MCF 10A (cell line): ENCODE measurements at regions of chr4 and their contacts with region 1.

Region 1: DNA sequence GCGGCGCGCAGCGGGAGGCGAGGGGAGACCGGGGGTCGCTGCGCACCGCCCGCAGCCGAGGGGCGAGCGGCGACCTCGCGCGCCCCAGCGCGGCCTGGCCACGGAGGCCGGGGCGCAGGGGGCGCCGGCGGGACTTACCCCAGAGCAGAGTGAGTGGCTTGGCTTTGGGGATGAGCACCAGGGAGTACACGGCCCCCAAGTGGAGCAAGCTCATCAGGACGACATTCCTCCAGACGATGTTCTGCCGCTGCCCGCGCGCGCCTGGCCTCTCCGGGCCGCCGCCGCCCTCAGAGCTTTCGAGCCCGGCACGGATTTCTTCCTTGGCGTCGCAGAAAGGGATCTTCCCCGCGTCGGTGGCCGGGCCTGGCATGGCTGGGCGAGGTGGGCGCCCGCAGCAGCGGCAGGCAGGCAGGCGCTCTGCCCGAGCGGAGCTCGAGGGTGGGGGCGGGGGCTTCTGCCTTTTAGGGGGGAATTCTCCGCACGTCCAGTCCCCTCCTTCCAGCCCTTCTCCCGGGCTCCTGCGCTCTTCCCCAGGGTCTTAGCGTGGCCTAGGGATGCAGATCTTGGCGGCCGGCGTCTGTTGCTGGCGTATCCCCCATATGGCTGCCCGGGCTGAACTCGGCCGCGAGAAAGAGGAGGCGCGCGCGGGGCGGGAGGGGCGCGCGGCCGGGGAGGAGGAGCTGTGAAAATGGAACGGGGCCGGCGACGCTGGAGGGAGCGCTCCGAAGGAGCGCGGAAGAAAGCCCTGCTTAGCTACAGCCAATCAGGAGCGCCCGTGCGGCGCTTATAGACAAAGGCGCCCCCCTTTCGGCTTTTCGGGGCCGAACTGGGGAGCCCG is at the start of gene SCD5:
- DNase-seq: peak; percentile 77
- H3K4me3 Mint-ChIP-seq: peak within 1 kb of the TSS; percentile 84
- H3K27ac Mint-ChIP-seq: no peak within 1 kb of the TSS
- H3K4me1 Mint-ChIP-seq: peaks cover 11% of the 10 kb centered on the region
- H3K27me3 Mint-ChIP-seq: no peaks in the 10 kb centered on the region
- CTCF ChIP-seq: no peak
- total RNA-seq, gene SCD5: 3.5 and 3.6 TPM in 2 replicates

Region 2: GRCh38 chr4:82352913-82353366 is 445.4 kb before region 1 on chr4:
- CTCF ChIA-PET with region 1: no interaction called
- POLR2A ChIA-PET with region 1: no interaction called
- intact Hi-C with region 1: no loop called
- DNase-seq: no peak
- H3K4me3 Mint-ChIP-seq: no peak overlapping the region
- H3K27ac Mint-ChIP-seq: no peak overlapping the region
- H3K4me1 Mint-ChIP-seq: peaks cover 5% of the 10 kb centered on the region
- H3K27me3 Mint-ChIP-seq: no peaks in the 10 kb centered on the region
- CTCF ChIP-seq: no peak

Region 3: DNA sequence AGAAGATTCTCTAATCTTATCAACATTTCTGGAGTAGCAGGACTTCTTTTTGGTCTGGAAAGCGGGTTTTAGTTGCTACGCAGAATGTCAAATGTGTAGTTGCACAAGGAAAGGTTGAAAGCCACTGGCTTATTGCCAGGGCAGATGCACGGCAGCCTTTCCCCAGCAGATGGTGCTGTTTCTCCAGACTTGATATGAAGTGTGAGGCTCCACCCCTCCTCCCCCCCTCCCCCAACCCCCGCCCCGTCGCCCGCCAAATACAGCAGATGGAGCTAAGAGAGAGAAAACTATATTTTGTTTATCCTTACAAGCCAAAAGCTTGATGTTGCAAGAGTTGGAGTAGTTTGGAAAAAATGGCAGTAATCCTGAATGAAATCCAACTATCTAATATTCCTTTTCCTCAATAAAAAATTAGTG is 336.0 kb before region 1 on chr4:
- CTCF ChIA-PET with region 1: interaction called, 9 read pairs
- POLR2A ChIA-PET with region 1: no interaction called
- intact Hi-C with region 1: loop called (anchors 1 kb)
- DNase-seq: peak; percentile 90
- H3K4me3 Mint-ChIP-seq: no peak overlapping the region
- H3K27ac Mint-ChIP-seq: no peak overlapping the region
- H3K4me1 Mint-ChIP-seq: peaks cover 6% of the 10 kb centered on the region
- H3K27me3 Mint-ChIP-seq: no peaks in the 10 kb centered on the region
- CTCF ChIP-seq: peak; percentile 86

Region 4: GRCh38 chr4:82525395-82525831 is 273.0 kb before region 1 on chr4:
- CTCF ChIA-PET with region 1: no interaction called
- POLR2A ChIA-PET with region 1: no interaction called
- intact Hi-C with region 1: no loop called
- DNase-seq: no peak
- H3K4me3 Mint-ChIP-seq: no peak overlapping the region
- H3K27ac Mint-ChIP-seq: no peak overlapping the region
- H3K4me1 Mint-ChIP-seq: peaks cover 10% of the 10 kb centered on the region
- H3K27me3 Mint-ChIP-seq: peaks cover 14% of the 10 kb centered on the region
- CTCF ChIP-seq: no peak

Region 5: DNA sequence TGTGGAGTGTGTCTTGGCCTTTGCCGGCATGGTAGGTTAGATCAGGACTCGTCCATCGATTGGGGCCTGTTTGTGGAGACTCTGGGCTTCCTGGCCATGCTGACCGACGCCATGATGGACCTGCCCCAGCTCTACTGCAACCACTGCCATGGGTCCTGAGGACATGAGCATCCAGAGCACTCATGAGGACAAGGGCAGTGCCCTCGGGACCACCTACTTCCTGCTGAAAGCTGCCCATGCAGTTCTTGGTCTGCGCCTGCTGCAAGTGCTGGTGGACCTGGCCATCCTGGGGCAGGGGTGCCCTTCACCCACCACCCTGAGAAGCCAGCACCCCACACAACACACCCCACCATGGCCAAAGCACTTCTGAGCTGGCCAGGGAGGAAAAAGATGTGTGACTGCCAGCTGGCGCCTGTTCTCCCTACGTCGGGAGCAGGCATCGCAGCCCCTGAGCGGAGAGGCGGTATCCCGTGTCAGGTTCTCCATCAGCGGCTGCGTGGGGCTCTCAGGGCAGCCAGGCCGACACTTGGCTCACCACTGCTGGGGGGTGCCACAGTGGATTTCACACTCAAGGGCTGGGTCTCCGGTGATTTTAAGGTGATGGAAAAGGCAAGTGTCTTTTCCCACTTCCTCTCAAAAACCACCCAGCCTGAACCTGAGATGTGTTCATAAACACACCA is 106.1 kb before region 1 on chr4:
- CTCF ChIA-PET with region 1: interaction called, 10 read pairs
- POLR2A ChIA-PET with region 1: no interaction called
- intact Hi-C with region 1: no loop called
- DNase-seq: no peak
- H3K4me3 Mint-ChIP-seq: no peak overlapping the region
- H3K27ac Mint-ChIP-seq: no peak overlapping the region
- H3K4me1 Mint-ChIP-seq: peaks cover 5% of the 10 kb centered on the region
- H3K27me3 Mint-ChIP-seq: no peaks in the 10 kb centered on the region
- CTCF ChIP-seq: no peak

Region 6: DNA sequence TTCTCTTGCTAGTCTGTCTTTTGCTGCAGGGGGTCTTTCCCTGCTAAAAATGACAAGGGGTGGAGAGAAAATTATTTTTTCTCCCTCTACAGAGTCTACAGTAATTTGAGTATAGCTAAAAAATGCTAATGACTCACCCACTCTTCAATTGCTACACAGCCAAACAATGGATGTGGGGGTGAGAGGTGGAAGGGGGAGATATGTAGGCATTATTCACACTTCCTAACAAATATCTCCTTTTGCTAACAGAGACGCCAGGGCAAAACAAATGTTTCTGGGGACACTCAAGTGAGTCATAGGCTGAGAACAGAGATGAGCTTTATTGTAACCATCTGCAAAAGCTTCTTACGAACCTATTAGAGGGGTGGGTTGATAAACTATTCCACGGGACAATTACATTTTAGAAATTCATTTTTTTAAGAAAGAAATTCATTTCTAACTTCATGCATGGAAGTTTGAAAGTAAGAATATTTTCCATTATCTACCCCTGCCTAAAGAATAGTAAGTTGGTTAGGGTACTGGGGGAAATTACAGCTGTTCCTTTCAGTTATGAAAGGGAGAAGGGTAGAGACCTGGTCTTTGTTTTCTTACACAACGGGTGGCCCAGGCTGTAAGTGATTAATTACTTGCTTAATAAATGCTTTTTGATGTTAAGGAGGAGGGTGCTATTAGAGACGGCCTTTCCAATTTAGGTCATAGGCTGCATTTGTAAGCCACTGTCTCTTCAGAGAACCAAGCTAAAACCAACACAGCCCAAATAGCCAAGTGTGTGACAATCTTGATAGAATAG is 12.6 kb before region 1 on chr4:
- CTCF ChIA-PET with region 1: interaction called, 11 read pairs
- POLR2A ChIA-PET with region 1: interaction called, 30 read pairs
- intact Hi-C with region 1: no loop called
- DNase-seq: peak; percentile 96
- H3K4me3 Mint-ChIP-seq: peak overlapping the region; percentile 53
- H3K27ac Mint-ChIP-seq: peak overlapping the region; percentile 52
- H3K4me1 Mint-ChIP-seq: peaks cover 37% of the 10 kb centered on the region
- H3K27me3 Mint-ChIP-seq: no peaks in the 10 kb centered on the region
- CTCF ChIP-seq: no peak